Prostate gland (tissue), 2 donors: ENCODE measurements at regions of chr12 and their contacts with region 1.

Region 1: GRCh38 chr12:47032644-47033043 is 46.8 kb upstream of the PCED1B start:
- DNase-seq: no peak
- H3K4me3 ChIP-seq: no peak overlapping the region
- H3K27ac ChIP-seq: no peak overlapping the region
- H3K4me1 ChIP-seq: no peaks in the 10 kb centered on the region
- H3K27me3 ChIP-seq: no peaks in the 10 kb centered on the region
- CTCF ChIP-seq: peak in 3 of 4 experiments; percentile 37 to 74 (median 69)
- POLR2A ChIP-seq: no peak

Region 2: GRCh38 chr12:47307680-47308399 is 275.2 kb after region 1 on chr12:
- intact Hi-C with region 1: loop called (anchors 5 kb)
- DNase-seq: peak; percentile 31
- H3K4me3 ChIP-seq: no peak overlapping the region
- H3K27ac ChIP-seq: no peak overlapping the region
- H3K4me1 ChIP-seq: no peaks in the 10 kb centered on the region
- H3K27me3 ChIP-seq: no peaks in the 10 kb centered on the region
- CTCF ChIP-seq: peak in 3 of 4 experiments; percentile 13 to 66 (median 55)
- POLR2A ChIP-seq: no peak

Region 3: GRCh38 chr12:47328831-47329545 is 296.3 kb after region 1 on chr12:
- intact Hi-C with region 1: no loop called
- DNase-seq: no peak
- H3K4me3 ChIP-seq: no peak overlapping the region
- H3K27ac ChIP-seq: no peak overlapping the region
- H3K4me1 ChIP-seq: no peaks in the 10 kb centered on the region
- H3K27me3 ChIP-seq: no peaks in the 10 kb centered on the region
- CTCF ChIP-seq: no peak
- POLR2A ChIP-seq: no peak

Region 4: GRCh38 chr12:47408171-47408871 is 375.7 kb after region 1 on chr12:
- intact Hi-C with region 1: loop called (anchors 10 kb)
- DNase-seq: no peak
- H3K4me3 ChIP-seq: no peak overlapping the region
- H3K27ac ChIP-seq: no peak overlapping the region
- H3K4me1 ChIP-seq: no peaks in the 10 kb centered on the region
- H3K27me3 ChIP-seq: no peaks in the 10 kb centered on the region
- CTCF ChIP-seq: no peak
- POLR2A ChIP-seq: no peak

Region 5: DNA sequence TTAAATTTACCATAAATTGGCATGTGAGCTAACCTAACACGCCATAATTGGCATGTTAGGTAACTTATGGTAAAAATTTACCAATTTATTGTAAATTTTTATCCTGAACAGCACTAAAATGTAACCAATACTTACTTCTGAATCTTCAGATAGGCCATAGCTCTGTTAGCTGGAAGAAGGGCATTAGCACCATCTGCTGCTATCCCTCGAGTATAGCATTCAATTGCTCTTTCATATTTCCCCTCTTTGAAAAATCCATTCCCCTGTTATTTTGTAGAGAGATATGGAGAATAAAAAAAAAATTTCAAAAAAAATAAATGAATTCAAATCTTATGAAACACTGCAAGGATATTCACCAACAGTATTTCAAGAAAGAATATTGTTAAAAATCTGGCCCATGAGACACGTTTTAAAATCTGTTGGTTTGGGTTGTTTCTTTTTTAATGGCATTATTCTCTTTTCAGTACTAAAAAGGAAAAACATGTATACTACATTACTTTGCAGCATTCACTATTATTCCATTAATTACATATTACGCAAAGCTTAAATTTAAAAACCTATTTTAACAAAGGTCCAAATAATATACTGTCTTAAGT is 654.1 kb after region 1 on chr12:
- intact Hi-C with region 1: loop called (anchors 5 kb)
- DNase-seq: no peak
- H3K4me3 ChIP-seq: no peak overlapping the region
- H3K27ac ChIP-seq: no peak overlapping the region
- H3K4me1 ChIP-seq: no peaks in the 10 kb centered on the region
- H3K27me3 ChIP-seq: no peaks in the 10 kb centered on the region
- CTCF ChIP-seq: peak in 3 of 4 experiments; percentile 33 to 71 (median 58)
- POLR2A ChIP-seq: no peak